ENCODE measurements at regions of chr10 and their contacts with region 1.

Region 1: GRCh38 chr10:101782811-101783735 is at the start of gene NPM3:
- DNase-seq: peak; percentile 93
- ATAC-seq: peak; percentile 82
- H3K4me3 Mint-ChIP-seq: peak within 1 kb of the TSS; percentile 94
- H3K27ac Mint-ChIP-seq: peak within 1 kb of the TSS; percentile 96
- H3K4me1 Mint-ChIP-seq: peaks cover 55% of the 10 kb centered on the region
- H3K27me3 Mint-ChIP-seq: peaks cover 9% of the 10 kb centered on the region
- total RNA-seq, gene NPM3: 46.1 to 75.4 TPM

Region 2: GRCh38 chr10:101587725-101588653 is 195.1 kb before region 1 on chr10 and contains the starts of genes DPCD and POLL:
- CTCF ChIA-PET with region 1: interaction called, 27 read pairs
- DNase-seq: peak; percentile 97
- ATAC-seq: peak; percentile 97
- H3K4me3 Mint-ChIP-seq: peak within 1 kb of the TSS; percentile 93
- H3K27ac Mint-ChIP-seq: peak within 1 kb of the TSS; percentile 81
- H3K4me1 Mint-ChIP-seq: peaks cover 18% of the 10 kb centered on the region
- H3K27me3 Mint-ChIP-seq: no peaks in the 10 kb centered on the region
- total RNA-seq, gene DPCD: 3.7 to 4.2 TPM
- total RNA-seq, gene POLL: 30.5 to 34.1 TPM

Region 3: DNA sequence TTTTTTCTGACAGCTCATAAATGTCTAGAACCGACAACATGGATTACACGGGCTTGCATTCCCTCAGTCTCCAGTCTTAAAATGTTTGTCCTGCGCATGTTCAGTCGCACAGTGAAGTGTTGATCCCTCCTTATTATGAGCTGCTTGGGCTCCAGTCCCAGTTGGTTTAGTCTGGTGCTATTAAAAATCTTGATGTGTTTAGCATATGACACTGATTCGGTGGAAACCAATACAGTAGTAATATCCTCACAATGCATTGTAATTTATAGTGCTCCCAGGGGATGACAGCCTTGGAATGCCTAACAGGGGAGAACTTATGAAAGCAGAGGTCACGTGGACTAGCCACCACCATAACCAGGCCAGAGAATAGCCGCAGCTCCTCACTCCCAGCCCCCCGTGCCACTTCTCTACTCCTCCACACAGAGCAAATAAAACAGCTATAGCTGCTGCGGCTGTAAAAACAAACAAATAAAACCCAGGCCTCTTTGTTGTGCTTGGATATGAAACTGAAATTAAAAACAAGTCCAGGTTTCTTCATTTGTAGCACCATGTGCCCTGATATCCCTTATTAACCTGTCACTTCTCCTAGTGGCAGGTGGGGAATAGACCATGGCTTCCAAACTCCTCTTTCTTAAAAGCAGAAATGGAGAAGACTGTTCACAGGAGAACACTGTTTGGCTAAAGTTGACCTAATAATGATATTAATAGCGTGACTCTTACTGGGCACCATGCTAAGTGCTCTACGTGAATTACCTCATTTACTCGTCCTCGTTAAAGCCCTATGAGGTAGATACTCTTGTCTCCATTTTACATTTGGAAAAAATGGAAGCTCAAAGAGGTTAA is 187.3 kb before region 1 on chr10:
- CTCF ChIA-PET with region 1: interaction called, 198 read pairs
- DNase-seq: no peak
- ATAC-seq: no peak
- H3K4me3 Mint-ChIP-seq: no peak overlapping the region
- H3K27ac Mint-ChIP-seq: no peak overlapping the region
- H3K4me1 Mint-ChIP-seq: no peaks in the 10 kb centered on the region
- H3K27me3 Mint-ChIP-seq: no peaks in the 10 kb centered on the region

Region 4: DNA sequence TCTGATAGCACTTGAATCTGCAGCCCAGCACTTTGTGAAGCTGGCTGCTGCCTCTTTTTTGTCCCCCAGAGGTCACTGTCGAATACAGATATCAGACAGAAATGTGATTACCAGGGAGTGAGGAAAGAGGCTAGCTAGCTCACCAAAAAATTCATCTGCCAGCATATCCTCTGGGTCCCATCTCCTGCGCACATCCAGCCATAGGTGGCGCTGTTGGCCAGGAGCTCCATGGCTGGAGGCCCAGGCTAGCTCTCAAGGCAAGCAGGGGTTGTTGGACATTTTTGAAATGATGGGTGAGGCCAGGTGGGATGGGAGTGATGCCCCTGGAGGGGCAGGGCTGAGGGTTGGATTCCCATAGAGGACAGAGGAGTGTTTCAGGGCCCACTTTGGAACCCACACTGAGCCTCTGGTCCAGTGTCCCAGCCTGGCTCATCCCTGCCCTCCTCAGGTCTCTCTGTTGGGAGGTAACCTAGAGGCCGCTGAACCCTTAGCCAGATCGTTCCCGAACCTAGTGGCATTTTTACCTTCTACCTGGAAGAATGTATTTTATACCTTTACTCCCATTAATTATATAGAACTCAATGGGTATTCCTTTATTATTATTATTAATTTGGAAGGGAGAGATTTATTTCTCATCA is 180.2 kb before region 1 on chr10:
- CTCF ChIA-PET with region 1: interaction called, 198 read pairs
- DNase-seq: peak; percentile 83
- ATAC-seq: peak; percentile 98
- H3K4me3 Mint-ChIP-seq: no peak overlapping the region
- H3K27ac Mint-ChIP-seq: no peak overlapping the region
- H3K4me1 Mint-ChIP-seq: no peaks in the 10 kb centered on the region
- H3K27me3 Mint-ChIP-seq: no peaks in the 10 kb centered on the region

Region 5: GRCh38 chr10:101769541-101770180 is 13.4 kb before region 1 on chr10:
- CTCF ChIA-PET with region 1: interaction called, 25 read pairs
- DNase-seq: no peak
- ATAC-seq: no peak
- H3K4me3 Mint-ChIP-seq: no peak overlapping the region
- H3K27ac Mint-ChIP-seq: no peak overlapping the region
- H3K4me1 Mint-ChIP-seq: peaks cover 2% of the 10 kb centered on the region
- H3K27me3 Mint-ChIP-seq: peaks cover 64% of the 10 kb centered on the region

Region 6: DNA sequence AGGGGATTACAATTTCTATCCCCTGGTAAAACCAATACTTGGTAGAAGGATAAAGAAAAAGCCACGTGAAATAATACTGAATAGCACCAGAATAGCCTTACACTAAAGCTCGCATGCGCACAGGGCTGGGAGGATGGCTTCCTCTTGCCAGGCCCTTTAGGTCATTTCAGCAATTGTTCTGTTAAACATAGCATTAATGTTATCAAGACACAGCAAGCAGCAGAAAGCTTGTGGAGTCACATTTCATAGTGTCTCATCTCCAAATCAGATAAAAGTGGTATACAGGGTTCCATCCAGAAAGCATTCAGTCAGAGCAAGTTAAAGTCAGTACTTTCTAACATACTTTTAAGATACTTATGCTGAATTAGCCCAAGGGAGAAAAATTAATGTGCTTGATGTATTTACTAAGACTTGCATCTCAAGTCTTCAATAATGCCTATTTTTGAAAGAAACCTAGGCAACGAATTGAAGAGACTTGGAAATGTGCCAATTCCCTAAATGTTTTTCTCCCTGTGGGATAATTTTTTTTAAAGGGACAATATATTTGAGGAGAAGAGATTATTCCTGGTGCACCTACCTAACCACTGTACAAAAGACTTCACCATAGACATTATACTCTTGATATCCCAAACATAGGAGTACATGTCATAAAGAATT is 14.5 kb after region 1 on chr10:
- CTCF ChIA-PET with region 1: interaction called, 18 read pairs
- DNase-seq: no peak
- ATAC-seq: no peak
- H3K4me3 Mint-ChIP-seq: no peak overlapping the region
- H3K27ac Mint-ChIP-seq: no peak overlapping the region
- H3K4me1 Mint-ChIP-seq: peaks cover 3% of the 10 kb centered on the region
- H3K27me3 Mint-ChIP-seq: no peaks in the 10 kb centered on the region

Region 7: DNA sequence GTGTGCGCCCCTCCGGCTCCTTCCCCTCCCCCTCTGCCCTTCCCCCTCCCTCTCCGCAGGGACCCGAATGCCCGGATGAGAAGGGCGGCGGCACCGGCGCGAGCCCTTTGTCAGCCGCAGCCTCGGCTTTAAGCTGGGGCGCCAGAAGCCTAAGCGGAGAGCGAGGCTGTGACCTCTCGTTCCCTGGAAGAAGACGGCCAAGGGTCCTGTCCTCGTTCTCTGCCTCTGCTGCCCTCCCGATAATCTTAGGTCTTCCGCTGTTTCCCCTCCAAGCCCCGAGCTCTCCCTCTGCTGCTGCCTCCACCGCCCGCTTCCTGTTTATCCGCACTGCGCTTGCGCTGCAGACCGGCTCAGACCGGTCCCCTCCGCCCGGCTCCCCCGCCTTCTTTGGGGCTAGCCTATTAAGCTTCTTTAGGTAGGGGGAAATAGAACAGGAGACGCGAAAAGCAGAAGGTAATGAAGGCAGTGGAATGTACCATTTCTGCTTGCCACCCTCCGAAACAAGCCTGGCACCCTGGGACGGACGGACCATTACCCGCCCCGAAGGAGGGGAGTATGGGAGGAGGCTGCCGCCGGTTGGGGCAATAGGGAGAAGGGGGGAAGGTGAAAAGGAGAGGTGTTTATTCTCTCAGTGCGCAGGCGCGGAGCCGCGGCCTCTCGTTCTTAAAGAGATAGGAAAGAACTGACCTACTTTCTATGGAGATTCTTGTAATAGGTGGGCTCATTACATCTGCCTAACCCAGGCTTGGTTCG is 35.2 kb after region 1 on chr10 and contains the start of gene OGA:
- CTCF ChIA-PET with region 1: interaction called, 20 read pairs
- DNase-seq: peak; percentile 99
- ATAC-seq: peak; percentile 92
- H3K4me3 Mint-ChIP-seq: peak within 1 kb of the TSS; percentile 90
- H3K27ac Mint-ChIP-seq: peak within 1 kb of the TSS; percentile 97
- H3K4me1 Mint-ChIP-seq: peaks cover 41% of the 10 kb centered on the region
- H3K27me3 Mint-ChIP-seq: no peaks in the 10 kb centered on the region
- total RNA-seq, gene OGA: 120 to 139 TPM

Measured in activated CD8-positive, alpha-beta memory T cell treated with anti-CD3 and anti-CD28 coated beads, Interleukin-2, amount 10 ng/mL, durations not matched to agents 7 days and 5 days (primary cell).